H1 (cell line): ENCODE measurements at regions of chr12 and their contacts with region 1.

Region 1: DNA sequence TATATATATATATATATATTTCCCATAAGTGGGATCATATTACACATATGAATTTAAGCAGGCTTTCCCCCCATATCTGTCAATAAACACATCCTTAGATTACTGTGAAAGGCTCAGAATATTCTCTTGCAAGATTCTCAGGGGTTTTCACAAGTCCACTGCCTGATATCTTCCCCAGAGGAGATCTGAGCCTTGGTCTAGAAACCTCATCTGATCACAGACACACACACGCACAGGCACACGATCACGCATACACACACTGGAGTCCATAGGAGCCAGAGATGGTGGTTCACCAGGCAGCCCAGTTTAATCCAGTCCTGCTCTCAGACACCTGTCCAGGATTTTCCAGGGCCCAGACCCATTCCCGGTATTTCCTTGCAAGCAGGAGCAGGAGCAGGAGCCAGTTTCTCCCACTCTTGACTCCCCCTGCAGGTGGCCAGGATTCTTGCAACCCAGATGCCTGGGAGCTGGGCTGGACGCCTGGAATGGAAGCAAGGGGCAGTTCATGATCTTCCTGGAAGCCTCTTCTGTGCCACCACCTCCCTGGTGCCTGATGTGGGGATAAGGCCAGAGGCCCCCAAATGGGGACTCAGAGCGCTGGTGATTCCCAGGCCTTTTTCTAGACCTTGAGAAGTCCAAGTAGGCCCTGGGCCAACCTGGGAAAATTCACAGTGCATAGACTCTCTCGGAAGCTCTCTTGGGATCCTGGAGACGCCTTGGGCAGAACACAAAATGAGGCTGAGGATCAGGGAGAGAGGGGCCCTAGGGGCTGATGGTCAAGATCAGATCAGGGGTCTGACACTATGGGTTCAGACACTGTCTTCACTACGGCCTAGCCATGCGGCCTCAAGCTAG is 16.5 kb upstream of the KRT78 start:
- DNase-seq: peak in 1 of 2 experiments; percentile 95
- H3K4me3 ChIP-seq: no peak overlapping the region
- H3K27ac ChIP-seq: no peak overlapping the region
- H3K4me1 ChIP-seq: no peaks in the 10 kb centered on the region; a peak in 1 of 7 replicates
- H3K27me3 ChIP-seq: no peaks in the 10 kb centered on the region; a peak in 1 of 7 replicates
- CTCF ChIP-seq: peak; percentile 84 to 95 (median 94)
- EP300 ChIP-seq: no peak
- POLR2A ChIP-seq: no peak
- RAD21 ChIP-seq: peak; percentile 91 to 92

Region 2: DNA sequence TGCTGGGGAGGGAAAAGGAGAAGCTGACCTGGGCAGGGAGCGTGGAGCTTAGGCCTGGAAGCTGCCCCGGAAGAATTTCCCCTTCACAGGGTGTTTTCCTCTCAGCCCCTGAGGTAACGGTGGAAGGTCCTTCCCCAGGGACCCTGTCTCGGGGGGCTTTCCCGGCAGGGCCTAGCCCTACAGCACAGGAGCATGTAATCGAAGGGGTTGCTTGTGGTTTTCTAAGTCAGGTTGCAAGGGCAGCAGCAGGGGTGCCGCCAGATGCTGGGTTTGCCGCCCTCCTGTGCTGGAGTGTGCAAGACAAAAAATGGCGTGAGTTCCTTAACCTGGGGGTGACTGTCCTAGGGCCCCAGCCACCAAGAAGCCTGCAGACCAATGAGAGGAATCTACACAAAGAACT is 290.1 kb before region 1 on chr12:
- CTCF ChIA-PET with region 1: interaction called, 502 read pairs
- POLR2A ChIA-PET with region 1: no interaction called
- DNase-seq: no peak
- H3K4me3 ChIP-seq: no peak overlapping the region
- H3K27ac ChIP-seq: no peak overlapping the region
- H3K4me1 ChIP-seq: no peaks in the 10 kb centered on the region
- H3K27me3 ChIP-seq: no peaks in the 10 kb centered on the region; a peak in 1 of 7 replicates
- CTCF ChIP-seq: no peak
- EP300 ChIP-seq: no peak
- POLR2A ChIP-seq: no peak
- RAD21 ChIP-seq: no peak

Region 3: GRCh38 chr12:52691076-52691840 is 174.1 kb before region 1 on chr12:
- CTCF ChIA-PET with region 1: interaction called, 39 read pairs
- POLR2A ChIA-PET with region 1: no interaction called
- DNase-seq: peak in 1 of 2 experiments; percentile 68
- H3K4me3 ChIP-seq: peak overlapping the region; percentile 31 to 58 (median 36)
- H3K27ac ChIP-seq: no peak overlapping the region
- H3K4me1 ChIP-seq: peaks cover 0 to 9% (median 3%) of the 10 kb centered on the region in 4 experiments; a peak in 2 of 7 replicates
- H3K27me3 ChIP-seq: peaks cover 0 to 30% (median 16%) of the 10 kb centered on the region in 4 experiments; a peak in 6 of 7 replicates
- CTCF ChIP-seq: no peak
- EP300 ChIP-seq: no peak
- POLR2A ChIP-seq: no peak
- RAD21 ChIP-seq: no peak

Region 4: GRCh38 chr12:52807544-52808470 is 57.5 kb before region 1 on chr12:
- CTCF ChIA-PET with region 1: interaction called, 11 read pairs
- POLR2A ChIA-PET with region 1: no interaction called
- DNase-seq: no peak
- H3K4me3 ChIP-seq: no peak overlapping the region
- H3K27ac ChIP-seq: no peak overlapping the region
- H3K4me1 ChIP-seq: peaks cover 3 to 6% (median 4%) of the 10 kb centered on the region in 4 experiments
- H3K27me3 ChIP-seq: no peaks in the 10 kb centered on the region
- CTCF ChIP-seq: peak in 1 of 3 experiments; percentile 22; a peak in 1 of 4 replicates
- EP300 ChIP-seq: no peak
- POLR2A ChIP-seq: no peak
- RAD21 ChIP-seq: no peak

Region 5: DNA sequence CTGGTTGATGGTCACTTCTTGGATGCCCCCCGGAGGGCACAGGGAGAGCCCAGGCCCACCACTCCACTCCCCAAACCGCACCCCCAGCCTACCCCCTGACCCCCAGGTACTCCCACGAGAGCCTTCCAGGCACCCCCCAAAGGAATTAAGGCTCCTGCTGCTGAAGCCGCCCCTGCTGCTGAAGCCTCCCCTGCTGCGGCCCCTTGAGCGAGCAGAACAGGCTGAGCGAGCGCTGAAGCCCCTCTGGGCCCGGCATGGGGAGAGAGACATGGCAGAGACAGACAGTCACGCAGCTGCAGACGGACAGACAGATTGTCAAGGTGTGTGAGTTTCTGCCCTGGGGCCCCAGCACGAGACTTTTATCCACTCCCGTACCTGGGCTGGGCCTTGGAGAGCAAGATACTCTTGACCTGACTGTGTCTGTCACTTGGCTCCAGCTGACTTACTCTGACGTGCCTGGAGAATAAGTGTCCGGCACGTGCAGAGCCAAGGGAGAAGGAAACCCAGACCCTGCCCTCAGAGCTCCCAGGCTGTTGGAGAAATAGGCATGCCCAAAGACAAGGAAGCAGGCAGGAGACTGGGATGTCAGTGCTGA is 16.6 kb before region 1 on chr12 and contains the start of gene KRT78:
- CTCF ChIA-PET with region 1: interaction called, 11 read pairs
- POLR2A ChIA-PET with region 1: no interaction called
- DNase-seq: no peak
- H3K4me3 ChIP-seq: no peak within 1 kb of the TSS
- H3K27ac ChIP-seq: no peak within 1 kb of the TSS
- H3K4me1 ChIP-seq: no peaks in the 10 kb centered on the region
- H3K27me3 ChIP-seq: no peaks in the 10 kb centered on the region; a peak in 1 of 7 replicates
- CTCF ChIP-seq: no peak
- EP300 ChIP-seq: no peak
- POLR2A ChIP-seq: no peak
- RAD21 ChIP-seq: no peak
- total RNA-seq, gene KRT78: not detected in 2 replicates

Region 6: DNA sequence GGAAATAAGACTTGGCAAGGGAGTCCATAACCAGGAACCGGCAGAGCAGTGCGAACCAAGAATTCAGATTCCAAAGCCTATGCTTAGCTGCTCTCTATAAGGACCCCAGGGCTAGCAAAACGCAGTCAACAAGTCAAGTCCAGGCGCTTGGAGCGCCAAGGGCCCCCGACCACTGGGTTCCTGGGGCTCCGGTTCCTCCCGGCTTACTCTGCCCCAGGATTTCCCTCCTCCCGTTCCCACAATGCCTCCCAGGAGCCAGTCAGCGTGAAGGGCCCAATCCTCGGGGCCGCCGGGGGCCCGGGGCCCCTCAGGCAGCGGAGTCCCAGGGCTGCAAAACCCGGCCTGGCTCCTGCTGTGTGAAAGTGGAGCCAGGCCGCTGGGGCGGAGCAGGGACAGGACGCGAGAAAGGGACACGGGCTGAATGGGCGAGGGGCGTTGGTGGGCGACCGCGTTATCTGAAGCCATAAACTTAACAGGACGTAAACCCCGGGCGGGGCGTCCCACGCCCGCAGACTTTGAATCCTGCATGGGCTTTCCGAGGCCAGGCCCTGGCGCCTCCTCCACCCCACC is 38.1 kb after region 1 on chr12:
- CTCF ChIA-PET with region 1: no interaction called
- POLR2A ChIA-PET with region 1: no interaction called
- DNase-seq: peak; percentile 61 to 91
- H3K4me3 ChIP-seq: peak overlapping the region; percentile 59 to 100 (median 76)
- H3K27ac ChIP-seq: no peak overlapping the region
- H3K4me1 ChIP-seq: peaks cover 14 to 21% (median 15%) of the 10 kb centered on the region in 4 experiments
- H3K27me3 ChIP-seq: no peaks in the 10 kb centered on the region; a peak in 1 of 7 replicates
- CTCF ChIP-seq: no peak
- EP300 ChIP-seq: peak in 1 of 2 experiments; percentile 53; a peak in 1 of 3 replicates
- POLR2A ChIP-seq: no peak; a peak in 1 of 3 replicates
- RAD21 ChIP-seq: peak in 1 of 2 experiments; percentile 5; a peak in 1 of 4 replicates